AG04449 (cell line): ENCODE measurements at regions of chrX and their contacts with region 1.

Region 1: GRCh38 chrX:129600981-129601424 is 53.8 kb downstream of the APLN start:
- DNase-seq: no peak
- H3K4me3 ChIP-seq: no peak overlapping the region
- CTCF ChIP-seq: peak; percentile 43

Region 2: DNA sequence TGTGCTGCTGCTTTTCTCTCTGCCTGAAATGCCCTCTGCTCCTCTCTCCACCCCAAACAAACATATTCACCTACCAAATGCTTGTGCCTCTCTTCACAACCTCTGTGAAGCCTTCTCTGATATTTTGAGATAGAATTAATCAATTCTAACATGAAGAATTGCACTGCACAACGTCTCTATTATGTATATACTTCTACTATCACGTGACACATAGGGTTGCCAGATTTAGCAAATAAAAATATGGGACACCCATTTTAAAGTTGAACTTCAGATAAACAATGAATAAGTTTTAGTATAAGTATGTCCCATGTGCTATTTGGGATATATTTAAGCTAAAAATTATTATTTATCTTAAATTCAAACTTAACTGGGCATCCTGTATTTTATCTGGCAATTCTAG is 231.8 kb before region 1 on chrX:
- CTCF ChIA-PET with region 1: no interaction called
- POLR2A ChIA-PET with region 1: no interaction called
- DNase-seq: no peak
- H3K4me3 ChIP-seq: no peak overlapping the region
- CTCF ChIP-seq: no peak

Region 3: DNA sequence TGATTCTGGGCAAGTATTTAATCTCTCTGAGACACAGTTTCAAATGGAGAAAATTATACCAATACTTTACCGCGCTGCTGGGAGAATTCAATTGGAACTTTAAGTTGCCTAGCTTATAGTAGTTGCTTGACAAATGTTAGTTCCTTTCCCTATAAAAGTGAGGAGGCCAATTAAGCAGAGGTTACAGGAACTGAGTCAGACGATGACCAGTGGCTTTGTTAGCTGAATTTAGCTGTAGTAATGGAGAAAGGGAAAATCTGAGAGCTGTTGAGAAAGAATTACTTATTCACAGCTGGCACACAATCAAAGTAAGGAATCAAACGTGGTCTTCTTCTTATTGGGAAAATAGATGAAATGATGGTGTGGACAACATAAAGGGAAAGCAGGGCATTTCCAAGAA is 107.4 kb before region 1 on chrX:
- CTCF ChIA-PET with region 1: no interaction called
- POLR2A ChIA-PET with region 1: no interaction called
- DNase-seq: no peak
- H3K4me3 ChIP-seq: no peak overlapping the region
- CTCF ChIP-seq: no peak

Region 4: DNA sequence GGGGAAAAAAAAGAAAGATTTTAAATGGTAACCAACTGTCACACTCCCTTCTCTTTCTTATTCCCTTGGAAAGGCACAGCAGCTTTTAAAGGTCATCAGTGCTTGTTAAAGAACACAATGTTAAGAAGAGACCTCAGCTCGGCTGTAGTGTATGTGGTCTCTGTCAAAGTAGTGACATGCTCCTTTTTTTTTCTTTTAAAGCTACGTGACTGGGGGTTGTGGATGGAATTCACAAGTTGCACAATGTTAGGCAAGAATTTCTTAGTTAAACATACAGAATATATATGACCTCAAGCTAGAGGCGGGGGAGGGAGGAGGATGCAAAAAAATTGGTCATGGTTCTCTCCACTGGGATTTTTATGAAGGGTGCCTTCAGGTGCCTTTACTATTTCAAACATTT is 15.3 kb before region 1 on chrX:
- CTCF ChIA-PET with region 1: interaction called, 12 read pairs
- POLR2A ChIA-PET with region 1: no interaction called
- DNase-seq: no peak
- H3K4me3 ChIP-seq: no peak overlapping the region
- CTCF ChIP-seq: no peak